ENCODE measurements at regions of chr4 and their contacts with region 1.

Region 1: GRCh38 chr4:88514557-88515511 is 8.7 kb downstream of the PYURF start:
- DNase-seq: no peak
- ATAC-seq: no peak
- H3K4me3 Mint-ChIP-seq: no peak overlapping the region
- H3K27ac Mint-ChIP-seq: no peak overlapping the region
- H3K4me1 Mint-ChIP-seq: peaks cover 2% of the 10 kb centered on the region
- H3K27me3 Mint-ChIP-seq: no peaks in the 10 kb centered on the region

Region 2: GRCh38 chr4:88033309-88033708 is 481.5 kb before region 1 on chr4:
- CTCF ChIA-PET with region 1: interaction called, 11 read pairs
- POLR2A ChIA-PET with region 1: no interaction called
- intact Hi-C with region 1: loop called (anchors 5 kb)
- DNase-seq: peak; percentile 44
- ATAC-seq: peak; percentile 64
- H3K4me3 Mint-ChIP-seq: no peak overlapping the region
- H3K27ac Mint-ChIP-seq: no peak overlapping the region
- H3K4me1 Mint-ChIP-seq: peaks cover 6% of the 10 kb centered on the region
- H3K27me3 Mint-ChIP-seq: no peaks in the 10 kb centered on the region

Region 3: DNA sequence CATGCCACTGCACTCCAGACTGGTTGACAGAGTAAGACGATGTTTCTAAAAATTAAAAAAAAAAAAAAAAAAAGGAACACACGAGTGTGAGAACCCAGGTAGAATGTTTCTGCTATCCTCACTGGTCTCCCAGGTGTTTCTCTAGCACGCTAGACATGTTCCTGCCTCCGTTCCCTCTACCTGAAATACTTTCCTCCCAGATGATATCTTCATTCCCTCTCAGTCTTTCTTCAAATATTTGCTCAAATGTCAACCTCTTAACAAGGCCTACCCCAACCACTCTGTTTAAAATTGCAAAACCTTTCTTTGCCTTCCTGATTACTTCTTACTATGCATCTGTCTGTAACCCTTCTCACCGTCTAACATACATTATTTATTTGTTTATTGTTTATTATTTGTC is 296.9 kb before region 1 on chr4:
- CTCF ChIA-PET with region 1: interaction called, 43 read pairs
- POLR2A ChIA-PET with region 1: no interaction called
- intact Hi-C with region 1: loop called (anchors 1 kb)
- DNase-seq: no peak
- ATAC-seq: no peak
- H3K4me3 Mint-ChIP-seq: no peak overlapping the region
- H3K27ac Mint-ChIP-seq: no peak overlapping the region
- H3K4me1 Mint-ChIP-seq: peaks cover 2% of the 10 kb centered on the region
- H3K27me3 Mint-ChIP-seq: peaks cover 2% of the 10 kb centered on the region

Region 4: GRCh38 chr4:88230969-88231771 is 283.7 kb before region 1 on chr4:
- CTCF ChIA-PET with region 1: interaction called, 13 read pairs
- POLR2A ChIA-PET with region 1: no interaction called
- intact Hi-C with region 1: no loop called
- DNase-seq: no peak
- ATAC-seq: no peak
- H3K4me3 Mint-ChIP-seq: no peak overlapping the region
- H3K27ac Mint-ChIP-seq: no peak overlapping the region
- H3K4me1 Mint-ChIP-seq: peaks cover 6% of the 10 kb centered on the region
- H3K27me3 Mint-ChIP-seq: no peaks in the 10 kb centered on the region

Region 5: GRCh38 chr4:88366460-88366859 is 148.4 kb before region 1 on chr4:
- CTCF ChIA-PET with region 1: interaction called, 24 read pairs
- POLR2A ChIA-PET with region 1: no interaction called
- intact Hi-C with region 1: loop called (anchors 1 kb)
- DNase-seq: no peak
- ATAC-seq: peak; percentile 39
- H3K4me3 Mint-ChIP-seq: no peak overlapping the region
- H3K27ac Mint-ChIP-seq: no peak overlapping the region
- H3K4me1 Mint-ChIP-seq: no peaks in the 10 kb centered on the region
- H3K27me3 Mint-ChIP-seq: peaks cover 4% of the 10 kb centered on the region